ENCODE measurements at regions of chr2 and their contacts with region 1.

Region 1: DNA sequence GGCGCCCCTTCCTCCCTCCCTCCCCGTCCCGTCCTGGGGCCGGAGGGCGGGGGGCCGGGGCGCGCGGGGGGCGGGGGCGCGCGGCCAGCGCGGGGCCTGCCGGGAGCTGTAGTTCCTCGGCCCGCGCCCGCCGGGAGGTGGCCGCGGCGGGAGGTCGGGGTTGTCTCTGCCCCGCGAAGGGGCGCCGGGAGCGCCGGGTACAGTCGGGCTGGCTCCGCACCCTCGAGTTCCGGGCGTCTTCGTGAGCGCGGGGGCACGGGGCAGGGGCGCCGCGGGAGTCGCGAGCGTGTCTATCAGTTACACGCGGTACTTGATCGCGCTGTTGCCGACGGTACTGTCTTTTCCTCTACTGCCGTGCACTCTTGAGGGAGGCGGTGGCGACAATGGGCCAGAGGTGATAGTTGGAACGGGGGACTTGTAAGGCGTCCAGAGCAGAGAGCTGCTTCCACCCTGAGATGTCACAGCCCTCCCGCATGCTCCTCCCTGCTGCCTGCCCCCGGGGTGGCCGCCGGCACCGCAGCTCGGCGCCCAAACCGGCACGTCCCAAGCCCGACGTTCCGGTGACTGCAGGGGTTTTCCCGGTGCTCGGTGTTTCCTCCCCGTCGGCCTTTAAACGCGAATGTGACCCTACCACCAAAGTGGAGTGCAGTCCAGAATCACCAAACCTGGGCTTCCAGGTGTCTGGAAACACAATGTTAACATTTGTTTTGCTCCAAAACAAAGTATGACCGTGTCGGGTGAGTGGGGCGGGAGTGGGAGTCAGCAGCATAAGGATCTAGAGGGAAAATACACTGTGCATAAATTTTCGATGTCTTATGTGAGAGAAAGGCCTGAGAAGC is at the start of gene PRKD3:
- DNase-seq: peak; percentile 72
- H3K4me3 ChIP-seq: peak within 1 kb of the TSS; percentile 97 to 99 (median 98)
- H3K27ac ChIP-seq: peak within 1 kb of the TSS; percentile 64
- H3K4me1 ChIP-seq: peaks cover 27% of the 10 kb centered on the region
- H3K27me3 ChIP-seq: no peaks in the 10 kb centered on the region
- CTCF ChIP-seq: no peak
- POLR2A ChIP-seq: no peak
- total RNA-seq, gene PRKD3: 47.3 and 48.4 TPM in 2 replicates

Region 2: GRCh38 chr2:37231241-37232130 is 93.5 kb before region 1 on chr2 and contains the starts of genes CEBPZ and NDUFAF7:
- CTCF ChIA-PET with region 1: no interaction called
- POLR2A ChIA-PET with region 1: no interaction called
- dilution Hi-C with region 1: no loop called
- intact Hi-C with region 1: loop called (anchors 5 kb)
- DNase-seq: peak; percentile 96
- H3K4me3 ChIP-seq: peak within 1 kb of the TSS; percentile 83 to 96 (median 90)
- H3K27ac ChIP-seq: peak within 1 kb of the TSS; percentile 79
- H3K4me1 ChIP-seq: peaks cover 22% of the 10 kb centered on the region
- H3K27me3 ChIP-seq: no peaks in the 10 kb centered on the region
- CTCF ChIP-seq: no peak
- POLR2A ChIP-seq: peak; percentile 85
- total RNA-seq, gene CEBPZ: 36.7 and 46.9 TPM in 2 replicates
- total RNA-seq, gene NDUFAF7: 17.7 and 23.4 TPM in 2 replicates

Region 3: DNA sequence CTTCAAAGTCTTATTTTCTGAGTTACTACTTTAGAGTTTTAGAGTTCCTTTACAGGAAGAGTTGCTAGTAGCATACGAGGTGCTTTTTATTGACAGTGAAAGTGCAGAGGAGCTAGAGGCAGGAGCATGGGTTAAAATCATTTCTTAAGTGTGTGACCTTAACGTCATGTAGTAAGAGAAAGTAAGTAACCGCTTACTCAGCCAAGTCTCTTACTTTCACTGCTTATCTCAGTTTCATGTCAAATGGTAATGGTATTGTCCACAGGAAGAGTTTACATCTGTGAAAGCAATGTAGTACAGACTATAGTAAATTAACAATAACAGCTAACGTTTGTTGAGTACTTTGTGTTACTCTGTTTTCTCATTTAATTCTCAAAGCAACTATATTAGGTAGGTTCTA is 81.0 kb before region 1 on chr2:
- CTCF ChIA-PET with region 1: no interaction called
- POLR2A ChIA-PET with region 1: no interaction called
- dilution Hi-C with region 1: no loop called
- intact Hi-C with region 1: no loop called
- DNase-seq: peak; percentile 74
- H3K4me3 ChIP-seq: no peak overlapping the region
- H3K27ac ChIP-seq: peak overlapping the region; percentile 4
- H3K4me1 ChIP-seq: peaks cover 8% of the 10 kb centered on the region
- H3K27me3 ChIP-seq: no peaks in the 10 kb centered on the region
- CTCF ChIP-seq: no peak
- POLR2A ChIP-seq: no peak

Region 4: DNA sequence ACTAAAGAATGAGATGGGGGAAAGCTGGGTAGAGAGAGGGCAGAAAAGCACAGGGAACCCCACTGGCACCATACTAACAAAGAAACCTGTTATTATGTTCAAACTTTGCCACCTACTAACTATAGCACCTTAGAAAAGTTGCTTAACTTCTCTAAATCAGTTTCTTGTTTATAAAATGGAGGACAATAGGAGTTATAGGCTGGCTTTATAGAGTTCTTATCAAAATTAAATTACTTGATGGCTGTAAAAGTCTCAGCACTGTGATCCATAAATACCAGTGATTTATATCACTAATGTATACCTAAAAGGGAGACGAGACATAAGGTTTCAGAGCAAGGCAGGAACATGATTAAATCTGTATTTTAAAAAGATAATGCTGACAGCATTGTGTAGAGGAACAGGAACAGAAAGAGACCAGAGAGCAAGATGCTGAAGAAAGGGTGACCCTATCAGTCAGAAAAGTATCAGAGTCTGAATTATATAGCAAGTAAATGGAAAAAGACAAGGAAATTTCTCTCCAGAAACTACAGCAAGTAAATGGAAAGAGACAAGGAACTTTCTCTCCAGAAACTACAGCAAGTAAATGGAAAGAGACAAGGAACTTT is 29.4 kb before region 1 on chr2:
- CTCF ChIA-PET with region 1: no interaction called
- POLR2A ChIA-PET with region 1: no interaction called
- dilution Hi-C with region 1: no loop called
- intact Hi-C with region 1: no loop called
- DNase-seq: no peak
- H3K4me3 ChIP-seq: no peak overlapping the region
- H3K27ac ChIP-seq: no peak overlapping the region
- H3K4me1 ChIP-seq: no peaks in the 10 kb centered on the region
- H3K27me3 ChIP-seq: no peaks in the 10 kb centered on the region
- CTCF ChIP-seq: no peak
- POLR2A ChIP-seq: no peak

Region 5: DNA sequence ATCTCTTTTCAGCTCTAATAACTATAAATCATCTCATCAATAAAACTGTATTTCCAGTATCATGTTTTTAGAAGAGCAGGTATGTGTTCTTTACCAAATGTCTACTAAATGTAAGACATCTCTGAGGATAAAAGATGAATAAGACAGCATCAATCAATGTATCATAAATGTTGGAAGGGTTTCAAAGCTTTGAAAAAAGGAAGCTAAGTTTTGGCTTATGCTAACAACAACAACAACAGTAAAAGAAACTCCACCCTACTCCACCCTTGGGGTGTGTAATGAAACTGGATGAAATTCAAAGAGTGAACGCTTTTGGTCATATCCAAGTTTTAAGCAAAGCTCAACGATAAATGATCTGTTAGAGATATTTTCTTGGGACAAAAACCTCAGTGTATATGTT is 17.5 kb before region 1 on chr2:
- CTCF ChIA-PET with region 1: interaction called, 12 read pairs
- POLR2A ChIA-PET with region 1: no interaction called
- dilution Hi-C with region 1: no loop called
- intact Hi-C with region 1: no loop called
- DNase-seq: no peak
- H3K4me3 ChIP-seq: no peak overlapping the region
- H3K27ac ChIP-seq: no peak overlapping the region
- H3K4me1 ChIP-seq: peaks cover 3% of the 10 kb centered on the region
- H3K27me3 ChIP-seq: no peaks in the 10 kb centered on the region
- CTCF ChIP-seq: no peak
- POLR2A ChIP-seq: no peak

Region 6: GRCh38 chr2:37523814-37524362 is 198.9 kb after region 1 on chr2:
- CTCF ChIA-PET with region 1: no interaction called
- POLR2A ChIA-PET with region 1: no interaction called
- dilution Hi-C with region 1: no loop called
- intact Hi-C with region 1: no loop called
- DNase-seq: peak; percentile 34
- H3K4me3 ChIP-seq: no peak overlapping the region
- H3K27ac ChIP-seq: no peak overlapping the region
- H3K4me1 ChIP-seq: no peaks in the 10 kb centered on the region
- H3K27me3 ChIP-seq: no peaks in the 10 kb centered on the region
- CTCF ChIP-seq: no peak
- POLR2A ChIP-seq: no peak

Region 7: GRCh38 chr2:37653805-37654378 is 328.9 kb after region 1 on chr2:
- CTCF ChIA-PET with region 1: no interaction called
- POLR2A ChIA-PET with region 1: no interaction called
- dilution Hi-C with region 1: no loop called
- intact Hi-C with region 1: loop called (anchors 10 kb)
- DNase-seq: no peak
- H3K4me3 ChIP-seq: no peak overlapping the region
- H3K27ac ChIP-seq: peak overlapping the region; percentile 97
- H3K4me1 ChIP-seq: peaks cover 79% of the 10 kb centered on the region
- H3K27me3 ChIP-seq: no peaks in the 10 kb centered on the region
- CTCF ChIP-seq: no peak
- POLR2A ChIP-seq: peak; percentile 6

Region 8: GRCh38 chr2:38076606-38077430 is 751.8 kb after region 1 on chr2:
- CTCF ChIA-PET with region 1: no interaction called
- POLR2A ChIA-PET with region 1: no interaction called
- dilution Hi-C with region 1: no loop called
- intact Hi-C with region 1: loop called (anchors 5 kb)
- DNase-seq: no peak
- H3K4me3 ChIP-seq: peak overlapping the region; percentile 30 to 34 (median 32)
- H3K27ac ChIP-seq: no peak overlapping the region
- H3K4me1 ChIP-seq: peaks cover 16% of the 10 kb centered on the region
- H3K27me3 ChIP-seq: peaks cover 44 to 51% of the 10 kb centered on the region in 2 experiments
- CTCF ChIP-seq: peak in 1 of 2 donors; percentile 23
- POLR2A ChIP-seq: no peak

Measured in endothelial cell of umbilical vein (primary cell).